Activated T-helper 1 cell treated with anti-CD3 and anti-CD28 coated beads, Interleukin-12 subunit alpha, Interleukin-12 subunit beta, Interleukin-2, Interleukin-4 antibody, amounts not matched to agents 30 ng/mL and 10 ng/mL and 1 ng/mL, durations not matched to agents 14 hours and 24 hours and 36 hours (primary cell): ENCODE measurements at regions of chr2 and their contacts with region 1.

Region 1: GRCh38 chr2:160252278-160252887 is 52.3 kb upstream of the ITGB6 start:
- DNase-seq: no peak
- H3K4me3 Mint-ChIP-seq: no peak overlapping the region
- H3K27ac Mint-ChIP-seq: no peak overlapping the region
- H3K4me1 Mint-ChIP-seq: no peaks in the 10 kb centered on the region
- H3K27me3 Mint-ChIP-seq: peaks cover 1% of the 10 kb centered on the region

Region 2: GRCh38 chr2:160109936-160110673 is 142.3 kb before region 1 on chr2:
- intact Hi-C with region 1: loop called (anchors 1 kb)
- DNase-seq: peak; percentile 21
- H3K4me3 Mint-ChIP-seq: no peak overlapping the region
- H3K27ac Mint-ChIP-seq: no peak overlapping the region
- H3K4me1 Mint-ChIP-seq: no peaks in the 10 kb centered on the region
- H3K27me3 Mint-ChIP-seq: peaks cover 4% of the 10 kb centered on the region

Region 3: DNA sequence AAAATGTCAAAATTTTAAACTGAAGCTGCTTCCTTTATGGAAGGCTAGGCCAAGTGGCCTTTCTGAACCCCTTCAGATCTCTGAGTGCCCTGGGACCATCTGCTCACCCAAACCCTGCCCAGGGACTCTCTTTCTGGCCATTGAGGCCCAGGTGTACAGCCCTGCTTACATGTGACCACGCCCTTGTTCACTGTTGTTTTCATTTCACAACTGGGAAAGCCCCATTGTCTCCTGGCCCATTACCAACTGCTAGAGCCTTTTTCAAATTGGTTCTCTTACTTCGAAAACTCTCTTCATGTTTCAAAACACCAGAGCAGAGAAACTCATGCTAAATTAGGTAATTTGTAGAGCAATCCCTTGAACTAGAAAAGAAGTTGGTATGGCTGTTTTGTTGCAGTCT is 688.3 kb after region 1 on chr2:
- intact Hi-C with region 1: no loop called
- DNase-seq: peak; percentile 4
- H3K4me3 Mint-ChIP-seq: peak overlapping the region; percentile 8
- H3K27ac Mint-ChIP-seq: peak overlapping the region; percentile 25
- H3K4me1 Mint-ChIP-seq: peaks cover 27% of the 10 kb centered on the region
- H3K27me3 Mint-ChIP-seq: no peaks in the 10 kb centered on the region

Region 4: GRCh38 chr2:160970052-160970965 is 717.9 kb after region 1 on chr2:
- intact Hi-C with region 1: loop called (anchors 5 kb)
- DNase-seq: no peak
- H3K4me3 Mint-ChIP-seq: no peak overlapping the region
- H3K27ac Mint-ChIP-seq: no peak overlapping the region
- H3K4me1 Mint-ChIP-seq: no peaks in the 10 kb centered on the region
- H3K27me3 Mint-ChIP-seq: peaks cover 15% of the 10 kb centered on the region

Region 5: GRCh38 chr2:160994141-160995002 is 742.0 kb after region 1 on chr2:
- intact Hi-C with region 1: loop called (anchors 1 kb)
- DNase-seq: peak; percentile 57
- H3K4me3 Mint-ChIP-seq: no peak overlapping the region
- H3K27ac Mint-ChIP-seq: no peak overlapping the region
- H3K4me1 Mint-ChIP-seq: peaks cover 11% of the 10 kb centered on the region
- H3K27me3 Mint-ChIP-seq: peaks cover 2% of the 10 kb centered on the region

Region 6: DNA sequence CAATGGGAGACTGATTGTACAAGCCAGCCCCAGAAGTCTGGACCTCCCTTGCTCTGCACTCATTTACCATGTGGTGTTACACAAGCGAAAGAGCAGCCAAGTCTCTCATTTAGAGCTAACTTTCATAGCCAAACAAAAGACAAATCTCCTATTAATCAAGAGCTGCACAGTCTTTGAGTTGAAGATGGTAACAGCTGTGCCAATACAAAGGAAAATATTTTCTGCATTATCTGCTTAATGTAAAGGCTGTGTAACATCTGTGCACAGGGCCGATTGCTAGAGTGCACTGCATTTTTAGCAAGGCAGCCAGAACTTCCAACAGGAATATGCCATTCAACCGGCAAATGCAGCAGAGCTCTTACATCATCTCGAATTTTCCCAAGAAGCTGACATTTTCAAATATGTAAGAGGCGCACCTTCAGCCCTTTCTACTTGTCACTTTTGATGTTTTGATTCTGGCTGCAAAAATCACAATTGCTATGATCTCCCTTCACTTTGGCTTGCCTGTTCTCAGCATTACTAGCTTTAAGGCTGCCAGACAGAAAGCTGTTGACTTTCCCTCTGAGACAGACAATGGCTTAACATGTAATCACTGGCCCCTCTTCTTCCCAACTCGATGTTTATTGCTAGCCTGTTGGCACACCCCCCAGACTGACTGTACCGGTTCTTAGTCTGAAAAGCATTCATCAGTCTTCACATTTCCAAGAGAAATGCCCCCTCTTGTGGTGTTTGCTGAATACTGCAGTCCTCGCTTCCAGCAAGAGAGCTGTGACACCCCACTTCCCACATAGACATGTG is 811.0 kb after region 1 on chr2:
- intact Hi-C with region 1: loop called (anchors 1 kb)
- DNase-seq: peak; percentile 59
- H3K4me3 Mint-ChIP-seq: no peak overlapping the region
- H3K27ac Mint-ChIP-seq: no peak overlapping the region
- H3K4me1 Mint-ChIP-seq: peaks cover 30% of the 10 kb centered on the region
- H3K27me3 Mint-ChIP-seq: peaks cover 2% of the 10 kb centered on the region